ENCODE measurements at regions of chr7 and their contacts with region 1.

Region 1: DNA sequence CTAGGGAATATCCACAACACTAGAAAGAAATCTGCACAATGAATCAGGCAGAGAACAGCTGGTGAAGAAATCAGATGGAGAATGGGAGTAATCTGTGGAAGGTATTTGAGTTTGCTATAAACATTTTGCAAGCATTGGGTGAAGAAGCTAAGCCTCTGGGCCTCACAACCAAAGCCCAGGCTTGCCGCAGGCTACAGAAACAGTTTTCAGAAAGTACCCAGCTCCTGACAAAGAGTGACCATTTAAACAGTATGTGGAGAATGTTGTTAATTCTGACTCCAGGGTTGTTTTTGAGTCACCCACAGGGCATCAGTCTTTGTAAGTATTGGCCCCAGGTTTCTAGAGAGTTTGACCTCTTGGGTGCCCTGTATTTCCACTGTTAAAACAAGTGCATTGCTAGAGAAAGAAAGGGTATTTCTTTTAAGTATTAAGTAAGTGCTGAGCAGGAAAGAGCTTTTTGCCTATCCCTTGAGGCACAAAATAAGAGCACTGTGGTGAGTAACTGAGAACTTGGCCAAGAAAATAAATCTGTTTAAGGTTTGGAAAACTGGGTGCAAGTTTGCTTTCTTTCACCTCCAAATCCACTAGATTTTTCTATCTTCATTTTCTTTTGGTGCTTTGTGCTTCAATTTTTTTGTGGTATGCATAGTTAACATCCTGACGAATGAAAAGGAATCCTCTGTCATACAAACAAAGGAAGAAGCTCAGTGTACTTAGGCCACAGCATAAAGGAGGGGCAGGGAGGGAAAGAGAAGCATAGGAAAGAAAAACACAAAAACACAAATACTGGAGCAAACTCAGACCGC is 691.8 kb downstream of the SUGCT start:
- DNase-seq: no peak
- H3K4me3 ChIP-seq: no peak overlapping the region
- H3K27ac ChIP-seq: peak overlapping the region in 2 of 4 donors; percentile 46 to 81
- H3K4me1 ChIP-seq: peaks cover 0 to 32% (median 24%) of the 10 kb centered on the region in 4 donors
- H3K27me3 ChIP-seq: no peaks in the 10 kb centered on the region
- CTCF ChIP-seq: no peak
- EP300 ChIP-seq: no peak
- POLR2A ChIP-seq: no peak

Region 2: GRCh38 chr7:40405991-40406390 is 420.6 kb before region 1 on chr7:
- intact Hi-C with region 1: no loop called
- DNase-seq: no peak
- H3K4me3 ChIP-seq: no peak overlapping the region
- H3K27ac ChIP-seq: no peak overlapping the region
- H3K4me1 ChIP-seq: no peaks in the 10 kb centered on the region
- H3K27me3 ChIP-seq: no peaks in the 10 kb centered on the region
- CTCF ChIP-seq: no peak
- EP300 ChIP-seq: no peak
- POLR2A ChIP-seq: no peak

Region 3: GRCh38 chr7:40640566-40640965 is 186.0 kb before region 1 on chr7:
- intact Hi-C with region 1: no loop called
- DNase-seq: no peak
- H3K4me3 ChIP-seq: no peak overlapping the region
- H3K27ac ChIP-seq: no peak overlapping the region
- H3K4me1 ChIP-seq: peaks cover 0 to 4% (median 0%) of the 10 kb centered on the region in 4 donors
- H3K27me3 ChIP-seq: no peaks in the 10 kb centered on the region
- CTCF ChIP-seq: no peak
- EP300 ChIP-seq: no peak
- POLR2A ChIP-seq: no peak

Region 4: DNA sequence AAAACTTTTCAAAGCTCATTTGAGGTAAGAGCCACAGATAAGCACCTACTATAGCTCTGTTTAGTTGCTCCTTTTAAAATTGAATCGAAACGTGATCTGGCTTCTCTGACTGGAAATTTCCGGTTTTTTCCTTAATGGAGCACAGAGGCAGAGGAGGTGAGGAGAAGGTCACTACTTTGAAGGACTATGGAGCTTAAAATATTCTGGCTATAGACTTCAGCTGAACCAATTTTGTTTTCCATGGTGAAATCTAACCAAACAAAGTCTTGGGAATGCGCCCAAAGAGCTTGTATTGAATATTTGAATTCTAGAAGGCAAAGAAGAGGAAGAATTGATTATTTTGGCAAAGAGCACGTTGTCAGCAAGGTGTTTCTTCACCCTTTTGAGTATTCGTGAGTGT is 19.3 kb after region 1 on chr7:
- intact Hi-C with region 1: loop called (anchors 2 kb)
- DNase-seq: no peak
- H3K4me3 ChIP-seq: no peak overlapping the region
- H3K27ac ChIP-seq: no peak overlapping the region
- H3K4me1 ChIP-seq: no peaks in the 10 kb centered on the region
- H3K27me3 ChIP-seq: no peaks in the 10 kb centered on the region
- CTCF ChIP-seq: no peak
- EP300 ChIP-seq: no peak
- POLR2A ChIP-seq: no peak

Region 5: DNA sequence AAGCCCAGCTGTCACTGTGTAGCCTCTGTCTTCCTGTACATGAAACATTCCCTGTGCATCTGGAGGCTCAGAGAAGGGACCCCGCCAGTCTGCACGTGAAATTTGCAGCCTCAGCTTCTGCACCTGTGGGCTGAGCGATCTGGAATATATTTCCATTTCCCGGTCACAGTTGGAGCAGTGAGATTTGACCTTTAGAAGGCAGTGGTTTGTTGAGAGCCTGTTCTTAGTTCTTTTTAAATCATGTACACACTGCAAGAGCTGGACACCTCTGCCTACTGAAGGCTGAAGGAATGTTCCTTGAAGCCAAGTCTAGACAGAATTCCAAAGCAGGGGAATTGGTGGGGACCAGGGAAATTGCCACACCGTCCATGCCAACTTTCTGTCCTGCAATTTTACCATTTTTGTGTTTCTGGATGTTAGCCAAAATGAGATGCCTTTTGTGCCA is 169.6 kb after region 1 on chr7:
- intact Hi-C with region 1: no loop called
- DNase-seq: no peak
- H3K4me3 ChIP-seq: no peak overlapping the region
- H3K27ac ChIP-seq: no peak overlapping the region
- H3K4me1 ChIP-seq: peaks cover 0 to 9% (median 3%) of the 10 kb centered on the region in 4 donors
- H3K27me3 ChIP-seq: no peaks in the 10 kb centered on the region
- CTCF ChIP-seq: no peak
- EP300 ChIP-seq: no peak
- POLR2A ChIP-seq: no peak

Measured in sigmoid colon (tissue), 7 donors.